ENCODE measurements at regions of chr3 and their contacts with region 1.

Region 1: DNA sequence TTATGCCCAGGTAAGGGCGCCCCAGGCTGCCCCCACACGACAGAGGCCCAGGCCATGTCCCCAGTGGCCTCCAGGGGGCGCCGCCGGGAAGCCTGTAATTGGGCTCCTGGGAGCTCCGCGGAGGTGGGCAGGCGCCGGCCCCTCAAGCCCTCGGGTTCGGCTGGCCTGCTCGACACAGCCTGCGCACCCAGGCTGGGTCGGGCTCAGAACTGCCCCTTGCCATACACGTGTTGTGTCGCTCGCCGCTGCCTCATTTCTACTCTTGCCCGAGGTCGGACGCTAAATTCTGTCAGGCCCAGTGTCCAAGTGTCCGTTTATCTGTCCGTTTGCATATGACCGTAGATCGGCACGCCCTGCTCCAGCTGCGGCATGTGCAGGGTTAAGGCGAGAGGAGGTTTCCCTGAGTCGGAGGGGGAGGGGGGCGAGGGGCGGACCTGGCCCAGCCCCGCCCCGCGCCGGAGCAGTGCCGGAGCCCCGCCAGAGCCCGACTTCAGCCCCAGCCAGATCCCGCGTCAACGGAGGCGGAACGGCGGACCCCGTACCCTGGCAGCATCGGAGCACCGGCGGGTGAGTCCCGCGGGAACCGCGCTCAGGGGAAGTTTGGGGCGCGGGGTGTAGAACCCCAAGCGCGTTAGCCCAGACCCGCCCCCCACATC is at the start of gene KLHDC8B:
- DNase-seq: peak; percentile 86
- H3K4me3 ChIP-seq: peak within 1 kb of the TSS; percentile 89
- H3K27ac ChIP-seq: peak within 1 kb of the TSS; percentile 40
- H3K4me1 ChIP-seq: peaks cover 18% of the 10 kb centered on the region
- H3K27me3 ChIP-seq: no peaks in the 10 kb centered on the region
- total RNA-seq, gene KLHDC8B: 19.5 and 22.5 TPM in 2 replicates

Region 2: DNA sequence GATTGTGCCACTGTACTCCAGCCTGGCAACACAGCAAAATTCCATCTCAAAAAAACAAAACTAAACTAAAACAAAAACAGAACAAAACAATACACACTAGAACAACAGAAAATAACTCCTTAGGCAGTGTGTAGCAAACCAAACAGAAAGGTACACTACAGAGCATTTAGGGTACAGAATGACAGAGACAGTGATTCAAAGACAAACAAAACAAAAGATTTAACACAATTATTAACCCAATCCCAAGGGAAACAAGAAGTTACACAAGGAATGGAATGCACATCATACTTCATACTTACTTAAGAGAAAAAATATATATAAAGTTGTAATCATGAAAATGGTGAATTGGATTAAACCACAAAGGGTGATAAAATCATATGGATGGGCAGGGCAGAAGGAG is 285.5 kb before region 1 on chr3:
- in situ Hi-C with region 1: no loop called
- DNase-seq: peak; percentile 18
- H3K4me3 ChIP-seq: no peak overlapping the region
- H3K27ac ChIP-seq: no peak overlapping the region
- H3K4me1 ChIP-seq: no peaks in the 10 kb centered on the region
- H3K27me3 ChIP-seq: no peaks in the 10 kb centered on the region

Region 3: DNA sequence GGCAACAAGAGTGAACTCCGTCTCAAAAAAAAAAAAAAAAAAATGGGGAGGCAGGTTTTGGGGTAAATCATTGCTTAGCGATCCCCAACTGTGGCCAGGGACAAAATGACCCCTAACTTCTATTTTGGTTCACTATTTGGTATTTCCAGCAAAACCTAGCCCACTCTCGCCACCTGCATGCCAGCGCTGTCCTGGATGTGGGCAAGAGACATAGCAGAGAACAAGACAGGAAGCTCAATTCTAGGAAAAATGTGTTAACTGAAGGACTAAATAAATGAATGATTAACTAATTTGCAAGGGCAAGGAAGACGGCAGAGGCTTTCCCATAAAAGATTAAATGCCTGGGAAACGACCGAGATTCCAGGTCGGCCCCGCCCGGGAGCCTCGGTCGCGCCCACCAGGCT is 257.5 kb after region 1 on chr3:
- in situ Hi-C with region 1: loop called (anchors 25 kb)
- DNase-seq: no peak
- H3K4me3 ChIP-seq: peak overlapping the region; percentile 83
- H3K27ac ChIP-seq: peak overlapping the region; percentile 94
- H3K4me1 ChIP-seq: 0 out of 2 replicates have a peak, but pooled peaks cover 3% of the 10 kb centered on the region
- H3K27me3 ChIP-seq: no peaks in the 10 kb centered on the region

Measured in GM23248 (cell line).